Activated CD4-positive, alpha-beta memory T cell treated with anti-CD3 and anti-CD28 coated beads, Interleukin-2, amount 10 ng/mL, durations not matched to agents 7 days and 5 days (primary cell): ENCODE measurements at regions of chr2 and their contacts with region 1.

Region 1: DNA sequence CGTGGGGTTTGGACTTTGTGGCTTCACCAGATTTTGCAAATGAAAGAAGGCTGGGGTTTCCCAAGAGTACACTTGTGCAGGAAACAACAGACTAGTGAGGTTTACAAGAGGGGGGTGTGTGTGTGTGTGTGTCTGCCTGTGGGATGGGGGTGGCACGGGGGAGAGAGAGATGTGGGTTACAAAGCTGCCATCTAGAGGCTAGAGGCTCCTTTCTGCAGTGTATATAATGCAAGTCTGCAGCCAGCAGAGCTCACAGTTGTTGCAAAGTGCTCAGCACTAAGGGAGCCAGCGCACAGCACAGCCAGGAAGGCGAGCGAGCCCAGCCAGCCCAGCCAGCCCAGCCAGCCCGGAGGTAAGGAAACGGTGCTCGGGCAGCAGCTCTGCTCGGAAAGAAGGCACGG is at the start of gene ACKR3:
- DNase-seq: peak; percentile 73
- H3K4me3 Mint-ChIP-seq: no peak within 1 kb of the TSS
- H3K27ac Mint-ChIP-seq: no peak within 1 kb of the TSS
- H3K4me1 Mint-ChIP-seq: peaks cover 24% of the 10 kb centered on the region
- H3K27me3 Mint-ChIP-seq: peaks cover 30% of the 10 kb centered on the region
- total RNA-seq, gene ACKR3: 2.5 to 2.7 TPM

Region 2: GRCh38 chr2:236536727-236537398 is 32.7 kb before region 1 on chr2:
- CTCF ChIA-PET with region 1: interaction called, 23 read pairs
- POLR2A ChIA-PET with region 1: interaction called, 4 read pairs
- DNase-seq: peak; percentile 68
- H3K4me3 Mint-ChIP-seq: peak overlapping the region; percentile 92
- H3K27ac Mint-ChIP-seq: peak overlapping the region; percentile 88
- H3K4me1 Mint-ChIP-seq: peaks cover 58% of the 10 kb centered on the region
- H3K27me3 Mint-ChIP-seq: peaks cover 8% of the 10 kb centered on the region

Region 3: GRCh38 chr2:236558993-236559978 is 10.3 kb before region 1 on chr2:
- CTCF ChIA-PET with region 1: interaction called, 10 read pairs
- POLR2A ChIA-PET with region 1: interaction called, 6 read pairs
- DNase-seq: no peak
- H3K4me3 Mint-ChIP-seq: no peak overlapping the region
- H3K27ac Mint-ChIP-seq: no peak overlapping the region
- H3K4me1 Mint-ChIP-seq: peaks cover 28% of the 10 kb centered on the region
- H3K27me3 Mint-ChIP-seq: peaks cover 20% of the 10 kb centered on the region